ENCODE measurements at regions of chr4 and their contacts with region 1.

Region 1: DNA sequence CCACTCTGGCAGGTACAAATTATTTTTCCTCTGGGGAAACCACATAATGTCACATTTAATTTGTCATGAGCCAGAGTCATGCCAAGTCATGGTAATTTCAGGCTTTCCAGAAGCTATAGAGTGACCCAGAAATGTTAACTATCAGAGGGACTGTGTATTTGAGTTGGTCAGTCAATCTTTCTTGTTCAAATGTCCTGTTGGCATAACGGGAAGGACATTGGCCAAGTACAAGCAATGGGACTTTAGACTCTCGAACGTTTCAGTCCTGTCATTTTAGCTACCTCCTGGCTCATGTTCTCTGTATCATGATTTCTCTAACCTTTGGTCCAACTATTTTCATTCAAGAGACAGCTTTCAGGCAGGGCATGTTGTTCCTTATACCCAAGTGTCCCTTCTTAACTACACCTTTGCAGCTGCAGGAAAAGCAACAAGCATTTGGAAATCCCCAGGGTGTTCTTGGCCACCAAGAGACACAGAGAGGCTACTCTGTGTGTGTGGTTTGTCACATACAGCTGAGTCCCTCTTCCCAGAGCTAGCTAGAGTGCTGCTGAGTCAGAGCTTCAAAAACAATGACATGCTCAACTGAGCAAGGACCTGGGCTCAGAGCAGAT is 142.6 kb downstream of the EGF start:
- DNase-seq: peak; percentile 46
- ATAC-seq: peak; percentile 79
- H3K4me3 Mint-ChIP-seq: no peak overlapping the region
- H3K27ac Mint-ChIP-seq: peak overlapping the region; percentile 24
- H3K4me1 Mint-ChIP-seq: peaks cover 26% of the 10 kb centered on the region
- H3K27me3 Mint-ChIP-seq: no peaks in the 10 kb centered on the region
- CTCF ChIP-seq: no peak

Region 2: GRCh38 chr4:110087070-110087708 is 31.9 kb after region 1 on chr4:
- CTCF ChIA-PET with region 1: interaction called, 3 read pairs
- POLR2A ChIA-PET with region 1: no interaction called
- intact Hi-C with region 1: loop called (anchors 5 kb)
- DNase-seq: no peak
- ATAC-seq: peak; percentile 15
- H3K4me3 Mint-ChIP-seq: no peak overlapping the region
- H3K27ac Mint-ChIP-seq: peak overlapping the region; percentile 74
- H3K4me1 Mint-ChIP-seq: peaks cover 57% of the 10 kb centered on the region
- H3K27me3 Mint-ChIP-seq: no peaks in the 10 kb centered on the region
- CTCF ChIP-seq: no peak

Region 3: DNA sequence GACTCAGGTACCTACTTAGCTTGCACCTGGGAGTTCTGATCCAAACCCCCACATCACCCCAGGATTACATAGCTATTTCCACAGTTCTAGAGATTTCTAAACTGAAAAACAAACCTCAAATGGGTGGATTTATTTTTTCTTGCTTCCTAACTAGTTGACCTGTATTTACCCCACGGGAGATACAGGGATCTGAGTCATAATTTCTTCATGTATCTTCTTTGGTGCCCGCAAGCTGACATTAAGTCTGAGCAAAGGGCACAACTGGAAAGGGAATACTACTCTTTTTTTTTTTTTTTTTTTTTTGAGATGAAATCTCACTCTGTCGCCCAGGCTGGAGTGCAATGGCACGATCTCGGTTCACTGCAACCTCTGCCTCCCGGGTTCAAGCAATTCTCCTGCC is 153.2 kb after region 1 on chr4:
- CTCF ChIA-PET with region 1: interaction called, 4 read pairs
- POLR2A ChIA-PET with region 1: no interaction called
- intact Hi-C with region 1: loop called (anchors 5 kb)
- DNase-seq: no peak
- ATAC-seq: no peak
- H3K4me3 Mint-ChIP-seq: no peak overlapping the region
- H3K27ac Mint-ChIP-seq: no peak overlapping the region
- H3K4me1 Mint-ChIP-seq: peaks cover 2% of the 10 kb centered on the region
- H3K27me3 Mint-ChIP-seq: no peaks in the 10 kb centered on the region
- CTCF ChIP-seq: no peak